ENCODE measurements at regions of chr12 and their contacts with region 1.

Region 1: GRCh38 chr12:85448548-85449139 is 168.6 kb downstream of the ALX1 start:
- DNase-seq: peak; percentile 9
- ATAC-seq: peak; percentile 57
- H3K4me3 ChIP-seq: no peak overlapping the region
- H3K27ac ChIP-seq: no peak overlapping the region
- H3K4me1 ChIP-seq: no peaks in the 10 kb centered on the region
- H3K27me3 ChIP-seq: no peaks in the 10 kb centered on the region
- CTCF ChIP-seq: peak; percentile 40
- POLR2A ChIP-seq: no peak
- RAD21 ChIP-seq: peak; percentile 30; the same call in 1 of the 2 replicates

Region 2: GRCh38 chr12:84874125-84874824 is 574.4 kb before region 1 on chr12:
- CTCF ChIA-PET with region 1: no interaction called
- POLR2A ChIA-PET with region 1: no interaction called
- dilution Hi-C with region 1: no loop called
- in situ Hi-C with region 1: no loop called
- intact Hi-C with region 1: loop called (anchors 5 kb)
- DNase-seq: peak; percentile 60
- ATAC-seq: peak; percentile 87
- H3K4me3 ChIP-seq: no peak overlapping the region
- H3K27ac ChIP-seq: no peak overlapping the region
- H3K4me1 ChIP-seq: no peaks in the 10 kb centered on the region
- H3K27me3 ChIP-seq: no peaks in the 10 kb centered on the region
- CTCF ChIP-seq: peak; percentile 90
- POLR2A ChIP-seq: no peak
- RAD21 ChIP-seq: peak; percentile 83

Region 3: DNA sequence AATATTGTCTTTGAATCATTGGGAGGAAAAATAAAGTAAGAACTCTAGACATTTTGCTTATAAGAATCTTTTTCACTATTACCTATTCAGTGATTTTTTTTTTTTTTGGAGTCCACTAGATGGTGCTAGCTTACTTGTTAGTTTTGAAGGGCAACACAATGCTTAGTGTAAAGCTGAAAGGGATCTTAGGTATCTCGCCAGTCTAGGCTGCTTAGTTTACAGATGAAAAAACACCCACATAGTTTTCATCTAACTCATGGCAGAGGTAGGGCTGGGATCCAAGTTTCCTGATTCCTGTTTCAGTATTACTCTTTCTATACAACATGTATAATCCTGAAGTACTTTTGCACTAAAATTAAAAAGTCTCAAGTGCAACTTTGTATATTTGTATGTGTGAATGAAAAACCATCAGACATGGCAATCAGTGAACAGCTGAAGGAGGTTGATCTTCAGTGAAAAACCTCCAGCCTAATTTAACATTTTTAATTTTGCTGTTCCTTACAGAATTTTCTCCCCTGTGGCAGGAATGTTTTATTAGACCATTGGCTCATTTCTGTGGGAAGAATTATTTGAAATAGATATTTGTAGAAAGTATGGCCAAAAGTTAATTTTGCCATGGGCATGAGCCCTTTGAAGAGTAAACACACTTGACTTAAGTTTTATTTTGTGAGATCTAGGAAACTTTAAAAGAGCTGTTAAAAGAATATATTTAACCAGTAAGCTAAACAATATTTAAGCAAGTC is 371.8 kb before region 1 on chr12:
- CTCF ChIA-PET with region 1: no interaction called
- POLR2A ChIA-PET with region 1: no interaction called
- dilution Hi-C with region 1: no loop called
- in situ Hi-C with region 1: loop called (anchors 5 kb)
- intact Hi-C with region 1: loop called (anchors 1 kb)
- DNase-seq: peak; percentile 92
- ATAC-seq: peak; percentile 97
- H3K4me3 ChIP-seq: no peak overlapping the region
- H3K27ac ChIP-seq: no peak overlapping the region
- H3K4me1 ChIP-seq: no peaks in the 10 kb centered on the region
- H3K27me3 ChIP-seq: no peaks in the 10 kb centered on the region
- CTCF ChIP-seq: peak; percentile 55
- POLR2A ChIP-seq: no peak
- RAD21 ChIP-seq: peak; percentile 48

Region 4: GRCh38 chr12:85155787-85156186 is 292.9 kb before region 1 on chr12:
- CTCF ChIA-PET with region 1: no interaction called
- POLR2A ChIA-PET with region 1: no interaction called
- dilution Hi-C with region 1: no loop called
- in situ Hi-C with region 1: no loop called
- intact Hi-C with region 1: loop called (anchors 5 kb)
- DNase-seq: no peak
- ATAC-seq: no peak
- H3K4me3 ChIP-seq: no peak overlapping the region
- H3K27ac ChIP-seq: no peak overlapping the region
- H3K4me1 ChIP-seq: no peaks in the 10 kb centered on the region
- H3K27me3 ChIP-seq: no peaks in the 10 kb centered on the region
- CTCF ChIP-seq: no peak
- POLR2A ChIP-seq: no peak
- RAD21 ChIP-seq: no peak

Region 5: GRCh38 chr12:85310456-85311076 is 138.1 kb before region 1 on chr12:
- CTCF ChIA-PET with region 1: interaction called, 12 read pairs
- POLR2A ChIA-PET with region 1: no interaction called
- dilution Hi-C with region 1: no loop called
- in situ Hi-C with region 1: no loop called
- intact Hi-C with region 1: loop called (anchors 5 kb)
- DNase-seq: peak; percentile 1
- ATAC-seq: no peak
- H3K4me3 ChIP-seq: no peak overlapping the region
- H3K27ac ChIP-seq: no peak overlapping the region
- H3K4me1 ChIP-seq: no peaks in the 10 kb centered on the region
- H3K27me3 ChIP-seq: no peaks in the 10 kb centered on the region; the same call in 1 of the 2 replicates
- CTCF ChIP-seq: peak; percentile 35; the same call in 1 of the 2 replicates
- POLR2A ChIP-seq: no peak
- RAD21 ChIP-seq: no peak

Region 6: DNA sequence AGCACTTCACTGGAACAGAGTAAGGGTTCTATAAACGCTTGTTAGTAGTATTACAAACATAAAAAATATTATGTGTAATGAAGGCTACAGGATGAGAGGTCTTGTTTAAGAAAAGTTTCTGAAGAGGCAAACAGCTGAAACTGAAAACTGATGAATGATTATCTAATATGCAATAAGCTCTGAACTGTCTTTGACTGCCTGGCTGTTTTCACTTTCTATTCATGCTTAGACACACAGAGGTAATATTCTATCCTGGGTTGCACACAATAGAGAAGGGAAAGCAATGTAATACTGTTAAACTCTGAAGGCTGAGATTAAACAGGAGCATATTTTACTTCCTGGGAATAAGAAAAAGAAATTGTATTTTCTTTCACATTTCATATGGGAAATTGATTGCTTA is 82.7 kb after region 1 on chr12:
- CTCF ChIA-PET with region 1: no interaction called
- POLR2A ChIA-PET with region 1: interaction called, 10 read pairs
- dilution Hi-C with region 1: no loop called
- in situ Hi-C with region 1: no loop called
- intact Hi-C with region 1: no loop called
- DNase-seq: no peak
- ATAC-seq: no peak
- H3K4me3 ChIP-seq: no peak overlapping the region
- H3K27ac ChIP-seq: no peak overlapping the region
- H3K4me1 ChIP-seq: no peaks in the 10 kb centered on the region
- H3K27me3 ChIP-seq: no peaks in the 10 kb centered on the region
- CTCF ChIP-seq: no peak
- POLR2A ChIP-seq: no peak
- RAD21 ChIP-seq: no peak

Region 7: DNA sequence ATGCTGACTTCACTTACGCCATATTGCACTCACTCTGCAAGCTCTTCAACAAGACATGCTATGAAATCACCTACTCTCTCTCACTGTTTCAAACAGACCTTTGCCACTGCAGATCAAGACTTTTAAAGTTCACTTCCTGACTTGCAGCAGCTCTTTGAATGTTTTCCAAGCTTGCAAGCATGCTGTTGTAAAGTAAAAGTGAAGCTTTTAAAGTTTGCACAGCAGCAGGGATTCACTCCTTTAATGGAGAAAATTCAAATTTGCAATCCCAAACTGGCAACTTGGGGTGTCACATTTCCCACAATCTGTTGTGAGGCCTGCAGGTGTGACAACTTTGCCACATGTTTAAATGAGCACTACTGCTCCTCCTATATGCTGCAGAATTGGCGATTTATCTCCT is 102.3 kb after region 1 on chr12:
- CTCF ChIA-PET with region 1: no interaction called
- POLR2A ChIA-PET with region 1: no interaction called
- dilution Hi-C with region 1: no loop called
- in situ Hi-C with region 1: no loop called
- intact Hi-C with region 1: no loop called
- DNase-seq: no peak
- ATAC-seq: no peak
- H3K4me3 ChIP-seq: no peak overlapping the region
- H3K27ac ChIP-seq: no peak overlapping the region
- H3K4me1 ChIP-seq: no peaks in the 10 kb centered on the region
- H3K27me3 ChIP-seq: no peaks in the 10 kb centered on the region
- CTCF ChIP-seq: no peak
- POLR2A ChIP-seq: no peak
- RAD21 ChIP-seq: no peak

Measured in IMR-90 (cell line).